Activated CD8-positive, alpha-beta T cell treated with anti-CD3 and anti-CD28 coated beads for 36 hours (primary cell): ENCODE measurements at regions of chr15 and their contacts with region 1.

Region 1: DNA sequence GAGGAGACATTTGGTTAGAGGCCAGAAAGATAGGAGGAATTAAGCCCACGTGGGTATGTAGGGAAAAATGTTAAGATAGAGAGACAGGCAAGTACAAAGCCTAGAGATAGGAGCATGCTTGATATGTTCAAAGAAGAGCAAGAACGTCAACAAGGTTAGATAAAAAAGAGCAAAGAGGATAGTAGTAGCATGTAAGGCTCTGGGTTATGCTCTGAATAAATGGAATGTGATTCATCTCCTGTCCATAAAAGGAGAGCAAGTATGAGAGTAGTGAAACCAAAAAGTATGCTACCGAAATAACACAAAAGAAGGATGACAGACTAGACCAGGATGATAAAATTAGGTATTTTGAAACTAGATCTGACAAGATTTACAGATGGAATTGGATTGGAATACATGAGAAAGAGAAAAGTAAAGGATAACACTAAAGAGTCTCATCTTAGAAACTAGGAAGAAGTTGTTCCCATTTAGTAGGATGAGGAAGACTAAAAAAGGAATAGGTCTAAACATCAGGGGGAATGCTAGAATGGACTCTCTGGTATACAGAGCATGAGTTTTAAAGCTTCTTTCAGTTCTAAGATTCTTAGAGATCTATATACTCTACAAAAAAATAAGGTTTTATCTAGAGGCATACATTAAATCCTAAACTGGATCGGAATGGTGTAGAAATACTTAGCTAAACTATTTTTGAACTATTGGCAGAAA is 59.1 kb downstream of the TRPM7 start:
- DNase-seq: no peak
- ATAC-seq: peak; percentile 65
- H3K4me3 Mint-ChIP-seq: no peak overlapping the region
- H3K27ac Mint-ChIP-seq: peak overlapping the region; percentile 73
- H3K4me1 Mint-ChIP-seq: peaks cover 13% of the 10 kb centered on the region
- H3K27me3 Mint-ChIP-seq: no peaks in the 10 kb centered on the region
- CTCF ChIP-seq: no peak

Region 2: GRCh38 chr15:50590288-50590687 is 37.2 kb before region 1 on chr15:
- CTCF ChIA-PET with region 1: no interaction called
- POLR2A ChIA-PET with region 1: no interaction called
- intact Hi-C with region 1: no loop called
- DNase-seq: no peak
- ATAC-seq: no peak
- H3K4me3 Mint-ChIP-seq: no peak overlapping the region
- H3K27ac Mint-ChIP-seq: no peak overlapping the region
- H3K4me1 Mint-ChIP-seq: no peaks in the 10 kb centered on the region
- H3K27me3 Mint-ChIP-seq: no peaks in the 10 kb centered on the region
- CTCF ChIP-seq: no peak

Region 3: DNA sequence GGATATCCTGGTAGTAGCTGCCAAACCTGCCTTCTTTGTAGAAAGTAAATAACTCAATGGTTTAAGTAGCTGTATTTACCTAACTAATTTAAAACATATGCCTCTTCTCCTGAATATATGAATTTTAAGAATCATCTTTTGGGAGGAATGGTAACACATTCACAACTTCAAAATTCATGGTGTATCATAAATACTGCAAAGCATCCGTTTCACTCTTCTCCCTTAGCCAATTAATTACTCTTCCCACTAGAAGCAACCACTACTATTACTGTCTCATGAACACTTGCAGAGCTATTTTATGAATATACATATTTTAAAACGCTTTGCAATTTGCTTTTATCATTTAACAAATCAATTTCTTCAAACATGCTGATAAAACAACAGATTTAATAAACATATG is 22.0 kb before region 1 on chr15:
- CTCF ChIA-PET with region 1: interaction called, 14 read pairs
- POLR2A ChIA-PET with region 1: no interaction called
- intact Hi-C with region 1: no loop called
- DNase-seq: no peak
- ATAC-seq: no peak
- H3K4me3 Mint-ChIP-seq: no peak overlapping the region
- H3K27ac Mint-ChIP-seq: no peak overlapping the region
- H3K4me1 Mint-ChIP-seq: no peaks in the 10 kb centered on the region
- H3K27me3 Mint-ChIP-seq: no peaks in the 10 kb centered on the region
- CTCF ChIP-seq: no peak

Region 4: GRCh38 chr15:50613600-50613999 is 13.9 kb before region 1 on chr15:
- CTCF ChIA-PET with region 1: interaction called, 10 read pairs
- POLR2A ChIA-PET with region 1: no interaction called
- intact Hi-C with region 1: no loop called
- DNase-seq: no peak
- ATAC-seq: no peak
- H3K4me3 Mint-ChIP-seq: no peak overlapping the region
- H3K27ac Mint-ChIP-seq: no peak overlapping the region
- H3K4me1 Mint-ChIP-seq: no peaks in the 10 kb centered on the region
- H3K27me3 Mint-ChIP-seq: no peaks in the 10 kb centered on the region
- CTCF ChIP-seq: no peak

Region 5: DNA sequence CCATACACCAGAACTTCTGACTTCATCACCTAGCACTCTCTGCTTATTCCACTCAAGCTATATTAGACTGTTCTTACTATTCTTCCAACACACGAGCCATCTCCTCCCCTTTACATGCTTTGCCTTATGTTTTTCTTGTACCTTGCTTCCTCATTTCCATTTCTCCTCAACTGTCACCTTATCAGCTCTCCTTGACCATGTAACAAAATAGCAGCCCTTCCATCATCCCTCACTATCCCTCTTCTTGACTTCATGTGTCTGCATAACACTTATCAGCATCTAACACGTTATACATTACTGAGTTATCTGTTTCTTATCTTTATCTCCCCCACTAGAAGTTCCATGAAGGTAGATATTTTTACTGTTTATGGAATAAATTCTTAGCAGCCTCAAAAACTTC is 13.8 kb after region 1 on chr15:
- CTCF ChIA-PET with region 1: no interaction called
- POLR2A ChIA-PET with region 1: no interaction called
- intact Hi-C with region 1: no loop called
- DNase-seq: no peak
- ATAC-seq: no peak
- H3K4me3 Mint-ChIP-seq: no peak overlapping the region
- H3K27ac Mint-ChIP-seq: peak overlapping the region; percentile 14
- H3K4me1 Mint-ChIP-seq: peaks cover 11% of the 10 kb centered on the region
- H3K27me3 Mint-ChIP-seq: no peaks in the 10 kb centered on the region
- CTCF ChIP-seq: no peak

Region 6: GRCh38 chr15:50669611-50670010 is 42.1 kb after region 1 on chr15:
- CTCF ChIA-PET with region 1: no interaction called
- POLR2A ChIA-PET with region 1: no interaction called
- intact Hi-C with region 1: no loop called
- DNase-seq: no peak
- ATAC-seq: no peak
- H3K4me3 Mint-ChIP-seq: no peak overlapping the region
- H3K27ac Mint-ChIP-seq: peak overlapping the region; percentile 7
- H3K4me1 Mint-ChIP-seq: peaks cover 8% of the 10 kb centered on the region
- H3K27me3 Mint-ChIP-seq: no peaks in the 10 kb centered on the region
- CTCF ChIP-seq: no peak